Calu3 (cell line): ENCODE measurements at regions of chr4 and their contacts with region 1.

Region 1: DNA sequence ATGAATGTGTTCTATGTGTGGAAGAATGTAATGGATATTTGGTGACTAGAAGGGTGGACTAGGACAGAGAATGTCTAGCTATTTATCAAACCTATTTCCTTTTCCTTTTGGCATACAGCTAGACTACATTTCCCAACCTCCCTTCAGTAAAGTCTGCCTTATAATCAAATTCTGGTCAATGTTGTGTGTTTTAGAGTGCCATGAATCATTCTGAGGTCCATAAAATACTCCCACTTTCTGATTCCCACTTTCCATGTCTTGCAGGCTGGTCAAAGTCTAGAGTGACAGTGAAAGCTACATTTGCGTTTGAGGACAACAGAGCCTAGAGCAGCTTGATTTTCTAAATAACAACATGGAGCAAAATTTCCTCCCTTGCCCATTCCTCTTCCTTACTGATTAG is 217.2 kb downstream of the UGT8 start:
- DNase-seq: no peak
- H3K4me3 Mint-ChIP-seq: no peak overlapping the region
- H3K27ac Mint-ChIP-seq: no peak overlapping the region
- H3K4me1 Mint-ChIP-seq: no peaks in the 10 kb centered on the region
- H3K27me3 Mint-ChIP-seq: no peaks in the 10 kb centered on the region
- CTCF ChIP-seq: no peak

Region 2: GRCh38 chr4:114423582-114423981 is 392.2 kb before region 1 on chr4:
- CTCF ChIA-PET with region 1: no interaction called
- intact Hi-C with region 1: no loop called
- DNase-seq: no peak
- H3K4me3 Mint-ChIP-seq: no peak overlapping the region
- H3K27ac Mint-ChIP-seq: no peak overlapping the region
- H3K4me1 Mint-ChIP-seq: peaks cover 8% of the 10 kb centered on the region
- H3K27me3 Mint-ChIP-seq: no peaks in the 10 kb centered on the region
- CTCF ChIP-seq: no peak

Region 3: GRCh38 chr4:114827651-114828050 is 11.9 kb after region 1 on chr4:
- CTCF ChIA-PET with region 1: interaction called, 10 read pairs
- intact Hi-C with region 1: no loop called
- DNase-seq: no peak
- H3K4me3 Mint-ChIP-seq: no peak overlapping the region
- H3K27ac Mint-ChIP-seq: no peak overlapping the region
- H3K4me1 Mint-ChIP-seq: no peaks in the 10 kb centered on the region
- H3K27me3 Mint-ChIP-seq: no peaks in the 10 kb centered on the region
- CTCF ChIP-seq: no peak

Region 4: DNA sequence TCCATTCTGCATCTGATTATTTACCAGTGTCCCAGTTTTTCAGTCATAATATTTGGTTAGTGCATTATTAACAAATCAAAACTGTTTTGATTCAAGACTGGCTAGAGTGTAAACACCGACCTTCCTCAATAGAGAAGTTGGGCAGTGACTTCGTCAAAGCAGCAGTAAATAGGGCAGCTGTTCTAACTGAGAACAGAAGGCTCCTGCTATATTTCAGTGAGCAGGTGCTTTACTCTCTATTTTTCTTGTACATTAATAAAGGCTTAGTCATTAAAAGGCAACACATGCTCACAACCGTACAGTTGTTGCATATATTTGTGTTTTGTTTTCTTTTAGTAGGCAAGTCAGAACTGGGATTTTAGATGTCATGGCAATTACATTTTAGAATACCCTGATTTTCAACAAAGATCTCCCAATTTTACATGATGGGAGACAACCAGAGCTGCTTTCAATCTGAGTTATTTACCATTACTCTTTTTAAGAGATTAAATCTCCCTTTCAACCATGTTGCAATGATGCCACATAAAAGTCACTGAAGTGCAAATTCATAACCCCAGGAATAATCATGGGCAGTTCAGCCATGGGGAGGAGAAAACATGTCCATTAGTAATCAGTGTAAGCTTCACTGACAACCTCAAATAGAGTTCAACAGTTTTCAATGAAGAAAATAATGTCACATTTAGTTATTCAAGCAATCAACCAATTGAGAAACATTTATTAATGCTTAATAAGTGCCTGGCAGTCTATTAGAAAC is 64.3 kb after region 1 on chr4:
- CTCF ChIA-PET with region 1: no interaction called
- intact Hi-C with region 1: no loop called
- DNase-seq: no peak
- H3K4me3 Mint-ChIP-seq: no peak overlapping the region
- H3K27ac Mint-ChIP-seq: no peak overlapping the region
- H3K4me1 Mint-ChIP-seq: no peaks in the 10 kb centered on the region
- H3K27me3 Mint-ChIP-seq: no peaks in the 10 kb centered on the region
- CTCF ChIP-seq: no peak